Aorta (tissue), 5 donors: ENCODE measurements at regions of chr3 and their contacts with region 1.

Region 1: DNA sequence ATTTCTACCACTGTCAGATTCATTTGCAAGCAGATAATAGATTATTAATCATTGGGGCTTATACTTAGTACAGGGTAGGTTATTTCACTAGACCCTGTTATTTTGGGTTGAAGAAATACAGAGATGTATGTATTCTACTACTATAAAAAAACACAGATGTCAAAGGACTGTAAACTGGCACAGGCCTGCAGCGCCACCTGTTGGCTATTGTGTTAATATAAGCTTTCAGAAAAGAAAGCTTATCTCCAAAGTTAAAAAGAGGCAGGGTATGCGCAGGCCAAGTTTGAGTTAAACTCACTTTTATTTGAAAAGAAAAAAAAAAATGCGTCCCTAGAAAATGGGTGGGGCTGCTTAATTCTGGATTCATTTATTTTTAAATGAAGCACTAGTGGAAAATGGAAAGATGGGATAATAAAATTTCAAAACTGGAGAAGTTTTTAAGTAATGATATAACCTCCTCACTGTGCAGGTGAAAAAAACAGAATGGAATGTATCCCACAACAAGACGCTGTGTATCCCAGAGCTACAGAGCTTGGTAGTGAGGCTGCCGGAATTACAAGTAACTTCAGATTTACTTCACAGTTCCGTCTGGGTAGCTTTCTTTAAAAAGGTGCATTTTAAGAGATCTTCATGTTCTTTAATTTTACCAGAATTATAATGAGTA is 407.2 kb upstream of the TGFBR2 start:
- DNase-seq: peak; percentile 79 to 91
- ATAC-seq: peak; percentile 86
- H3K4me3 ChIP-seq: no peak overlapping the region
- H3K27ac ChIP-seq: no peak overlapping the region
- H3K4me1 ChIP-seq: peaks cover 0 to 4% of the 10 kb centered on the region in 2 donors
- H3K27me3 ChIP-seq: no peaks in the 10 kb centered on the region

Region 2: DNA sequence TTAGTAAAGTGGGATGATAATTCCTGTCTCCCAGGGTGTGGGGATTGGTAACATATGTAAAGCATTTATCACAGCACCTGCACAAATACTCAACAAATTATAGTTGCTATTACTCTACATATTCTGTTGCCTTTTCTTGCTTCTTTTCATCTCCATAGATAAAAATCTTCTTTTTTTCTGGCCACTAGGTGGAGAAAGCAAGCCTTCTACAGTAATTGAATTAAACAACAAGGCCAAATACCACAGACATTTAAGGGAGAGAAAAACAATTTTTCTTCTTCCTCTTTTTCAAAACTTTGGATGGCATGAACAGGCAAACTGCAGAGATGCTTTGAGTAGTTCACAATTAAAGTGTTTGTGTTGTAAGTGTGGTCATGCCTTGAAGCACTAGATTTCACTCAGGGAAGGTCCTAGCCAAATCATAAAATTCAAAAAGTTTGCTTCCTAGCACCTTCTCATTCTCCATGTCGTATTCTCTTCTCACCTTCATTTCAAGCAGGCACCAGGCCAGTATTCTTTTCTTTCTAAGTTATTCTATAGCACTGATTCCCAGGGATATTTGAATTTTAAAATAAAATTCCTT is 86.2 kb before region 1 on chr3:
- intact Hi-C with region 1: loop called (anchors 5 kb)
- DNase-seq: no peak
- ATAC-seq: no peak
- H3K4me3 ChIP-seq: no peak overlapping the region
- H3K27ac ChIP-seq: no peak overlapping the region
- H3K4me1 ChIP-seq: peaks cover 0 to 2% of the 10 kb centered on the region in 2 donors
- H3K27me3 ChIP-seq: no peaks in the 10 kb centered on the region

Region 3: GRCh38 chr3:31132132-31132769 is 933.0 kb after region 1 on chr3:
- intact Hi-C with region 1: no loop called
- DNase-seq: no peak
- ATAC-seq: no peak
- H3K4me3 ChIP-seq: no peak overlapping the region
- H3K27ac ChIP-seq: no peak overlapping the region
- H3K4me1 ChIP-seq: no peaks in the 10 kb centered on the region
- H3K27me3 ChIP-seq: no peaks in the 10 kb centered on the region